ENCODE measurements at regions of chr1 and their contacts with region 1.

Region 1: DNA sequence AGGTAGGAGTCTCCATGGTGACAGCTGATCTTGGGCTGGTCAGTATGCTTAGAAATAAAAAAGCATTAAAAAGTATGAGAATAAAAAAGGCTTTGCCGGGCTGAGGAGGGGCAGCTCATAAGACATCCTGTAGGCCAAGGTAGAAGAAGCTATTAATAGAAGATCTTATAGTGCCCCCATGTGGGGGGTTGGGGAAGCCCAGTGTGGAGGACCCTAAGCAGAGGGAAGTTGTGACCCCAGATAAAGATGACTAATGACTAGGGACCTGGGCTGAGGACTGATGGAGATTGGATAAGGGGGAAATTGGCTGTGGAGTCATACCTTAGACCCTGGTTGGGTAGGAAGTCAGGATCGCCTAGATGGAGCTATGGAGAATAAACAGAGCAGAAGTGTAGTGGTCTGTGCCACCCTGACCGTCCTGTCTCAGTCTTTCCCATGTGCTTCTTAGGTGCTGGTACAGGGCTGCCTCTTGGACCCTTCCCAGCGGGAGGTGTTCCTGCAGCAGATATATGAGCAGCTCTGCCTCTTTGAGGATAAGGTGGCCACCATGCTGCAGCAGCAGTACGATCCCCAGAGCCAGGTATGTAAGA is 25.0 kb downstream of the SZT2 start:
- DNase-seq: peak; percentile 68 to 76
- H3K4me3 ChIP-seq: no peak overlapping the region
- H3K4me3 Mint-ChIP-seq: no peak overlapping the region
- H3K27ac Mint-ChIP-seq: no peak overlapping the region
- H3K4me1 ChIP-seq: no peaks in the 10 kb centered on the region
- H3K4me1 Mint-ChIP-seq: no peaks in the 10 kb centered on the region
- H3K27me3 ChIP-seq: no peaks in the 10 kb centered on the region
- H3K27me3 Mint-ChIP-seq: no peaks in the 10 kb centered on the region
- CTCF ChIP-seq: peak; percentile 63 to 66

Region 2: GRCh38 chr1:43227143-43227764 is 187.5 kb before region 1 on chr1:
- CTCF ChIA-PET with region 1: interaction called, 38 read pairs
- POLR2A ChIA-PET with region 1: no interaction called
- intact Hi-C with region 1: loop called (anchors 1 kb)
- DNase-seq: peak; percentile 84 to 87
- H3K4me3 ChIP-seq: no peak overlapping the region
- H3K4me3 Mint-ChIP-seq: no peak overlapping the region
- H3K27ac Mint-ChIP-seq: peak overlapping the region; percentile 57
- H3K4me1 ChIP-seq: peaks cover 11% of the 10 kb centered on the region
- H3K4me1 Mint-ChIP-seq: peaks cover 23% of the 10 kb centered on the region
- H3K27me3 ChIP-seq: no peaks in the 10 kb centered on the region
- H3K27me3 Mint-ChIP-seq: no peaks in the 10 kb centered on the region
- CTCF ChIP-seq: peak; percentile 78 to 84

Region 3: GRCh38 chr1:43238085-43238484 is 176.6 kb before region 1 on chr1:
- CTCF ChIA-PET with region 1: interaction called, 4 read pairs
- POLR2A ChIA-PET with region 1: no interaction called
- intact Hi-C with region 1: loop called (anchors 1 kb)
- DNase-seq: peak; percentile 72 to 73
- H3K4me3 ChIP-seq: no peak overlapping the region
- H3K4me3 Mint-ChIP-seq: no peak overlapping the region
- H3K27ac Mint-ChIP-seq: no peak overlapping the region
- H3K4me1 ChIP-seq: no peaks in the 10 kb centered on the region
- H3K4me1 Mint-ChIP-seq: no peaks in the 10 kb centered on the region
- H3K27me3 ChIP-seq: no peaks in the 10 kb centered on the region
- H3K27me3 Mint-ChIP-seq: no peaks in the 10 kb centered on the region
- CTCF ChIP-seq: peak; percentile 39 to 69

Region 4: DNA sequence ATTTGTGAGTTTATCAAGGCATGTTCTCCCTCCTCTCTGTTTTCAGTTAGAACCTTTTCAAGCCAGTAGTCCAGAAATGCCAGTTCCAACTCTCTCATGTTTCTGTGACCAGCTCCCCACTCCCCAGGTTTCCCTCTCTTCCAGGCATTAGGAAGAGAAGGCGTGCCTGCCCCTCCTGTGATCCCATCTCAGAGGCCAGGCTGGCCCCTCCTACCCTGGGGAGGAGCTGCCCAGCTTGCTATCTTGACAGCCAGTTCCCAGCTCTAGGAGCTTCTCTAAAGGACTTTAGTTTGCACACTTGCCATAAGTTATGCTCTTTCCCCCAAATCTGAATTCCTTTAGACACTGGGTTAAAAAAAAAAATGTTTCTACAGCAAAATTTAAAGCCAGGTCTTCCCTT is 30.1 kb after region 1 on chr1:
- CTCF ChIA-PET with region 1: no interaction called
- POLR2A ChIA-PET with region 1: no interaction called
- intact Hi-C with region 1: no loop called
- DNase-seq: no peak
- H3K4me3 ChIP-seq: no peak overlapping the region
- H3K4me3 Mint-ChIP-seq: no peak overlapping the region
- H3K27ac Mint-ChIP-seq: peak overlapping the region; percentile 24
- H3K4me1 ChIP-seq: no peaks in the 10 kb centered on the region
- H3K4me1 Mint-ChIP-seq: peaks cover 16% of the 10 kb centered on the region
- H3K27me3 ChIP-seq: no peaks in the 10 kb centered on the region
- H3K27me3 Mint-ChIP-seq: no peaks in the 10 kb centered on the region
- CTCF ChIP-seq: no peak

Region 5: DNA sequence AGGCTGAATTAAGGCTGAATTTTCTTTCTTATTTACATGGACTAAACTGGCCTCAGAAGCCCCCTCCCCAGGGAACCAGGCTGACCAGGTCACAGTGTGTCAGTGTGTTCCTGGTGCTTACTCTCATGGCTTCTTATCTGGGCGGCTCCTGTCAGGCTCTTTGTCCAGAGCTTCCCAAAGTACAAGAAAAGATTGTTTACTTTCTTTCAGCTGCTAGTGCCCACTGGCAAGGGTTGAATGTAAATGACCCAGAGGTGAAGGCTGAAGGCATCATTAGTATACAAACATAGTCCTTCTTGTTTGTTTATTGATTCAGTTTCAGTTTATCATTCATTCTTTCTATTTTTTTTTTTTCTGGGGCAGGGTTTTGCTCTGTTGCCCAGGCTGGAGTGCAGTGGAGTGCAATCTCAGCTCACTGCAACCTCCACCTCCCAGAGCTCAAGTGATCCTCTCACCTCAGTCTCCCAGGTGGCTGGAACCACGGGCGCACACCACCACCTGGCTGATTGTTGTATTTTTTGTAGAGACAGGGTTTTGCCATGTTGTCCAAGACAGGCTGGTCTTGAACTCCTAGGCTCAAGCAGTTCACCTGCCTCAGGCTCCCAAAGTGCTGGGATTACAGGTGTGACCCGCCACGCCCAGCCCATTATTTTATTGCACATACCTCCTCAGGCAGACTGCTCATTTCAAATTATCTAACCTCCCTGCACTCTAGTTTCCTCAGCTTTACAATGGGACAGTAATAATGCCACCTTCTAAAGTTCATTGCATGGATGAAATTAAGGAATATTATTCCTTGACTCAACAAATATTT is 225.5 kb after region 1 on chr1:
- CTCF ChIA-PET with region 1: no interaction called
- POLR2A ChIA-PET with region 1: no interaction called
- intact Hi-C with region 1: no loop called
- DNase-seq: peak in 1 of 2 experiments; percentile 22
- H3K4me3 ChIP-seq: no peak overlapping the region
- H3K4me3 Mint-ChIP-seq: no peak overlapping the region
- H3K27ac Mint-ChIP-seq: no peak overlapping the region
- H3K4me1 ChIP-seq: no peaks in the 10 kb centered on the region
- H3K4me1 Mint-ChIP-seq: no peaks in the 10 kb centered on the region
- H3K27me3 ChIP-seq: no peaks in the 10 kb centered on the region
- H3K27me3 Mint-ChIP-seq: no peaks in the 10 kb centered on the region
- CTCF ChIP-seq: no peak

Region 6: GRCh38 chr1:43783671-43784205 is 369.0 kb after region 1 on chr1:
- CTCF ChIA-PET with region 1: no interaction called
- POLR2A ChIA-PET with region 1: no interaction called
- intact Hi-C with region 1: no loop called
- DNase-seq: no peak
- H3K4me3 ChIP-seq: no peak overlapping the region
- H3K4me3 Mint-ChIP-seq: no peak overlapping the region
- H3K27ac Mint-ChIP-seq: no peak overlapping the region
- H3K4me1 ChIP-seq: peaks cover 12% of the 10 kb centered on the region
- H3K4me1 Mint-ChIP-seq: no peaks in the 10 kb centered on the region
- H3K27me3 ChIP-seq: no peaks in the 10 kb centered on the region
- H3K27me3 Mint-ChIP-seq: no peaks in the 10 kb centered on the region
- CTCF ChIP-seq: no peak

Measured in Caco-2 (cell line).